Caco-2 (cell line): ENCODE measurements at regions of chr3 and their contacts with region 1.

Region 1: DNA sequence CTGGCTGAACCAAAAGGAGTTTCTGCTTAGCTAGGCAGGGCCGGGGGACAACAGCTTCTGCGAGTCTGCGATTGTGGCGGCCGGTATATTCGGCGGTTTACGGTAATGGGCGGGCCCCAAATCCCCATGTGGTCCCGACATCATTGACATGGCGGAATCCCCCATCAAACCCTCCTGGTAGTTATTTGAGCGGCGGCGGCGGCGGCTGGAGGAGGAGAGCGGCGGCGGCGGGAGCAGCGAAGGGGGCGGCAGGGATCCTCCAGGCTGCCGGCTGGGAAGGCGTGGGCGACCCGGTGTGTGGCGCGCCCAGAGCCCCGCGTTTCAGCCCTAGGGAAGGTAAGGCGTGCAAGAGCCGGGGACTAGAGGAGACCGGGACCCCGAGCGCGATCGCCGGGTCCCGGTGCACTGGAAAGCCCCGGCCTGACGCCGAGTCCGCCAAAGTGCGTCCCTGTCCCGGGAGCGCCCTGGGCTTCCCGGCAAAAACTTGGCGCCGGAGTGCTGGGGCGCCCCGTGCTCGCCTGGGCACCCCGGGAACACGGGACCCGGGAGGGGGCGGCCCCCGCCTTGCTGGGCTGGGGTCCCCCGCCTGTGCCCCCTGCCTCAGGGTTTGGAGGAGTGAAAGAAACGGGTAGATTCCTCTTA is at the start of gene FNDC3B:
- DNase-seq: peak; percentile 94 to 95
- H3K4me3 ChIP-seq: peak within 1 kb of the TSS; percentile 74
- H3K4me3 Mint-ChIP-seq: peak within 1 kb of the TSS; percentile 95
- H3K27ac Mint-ChIP-seq: peak within 1 kb of the TSS; percentile 96
- H3K4me1 ChIP-seq: peaks cover 28% of the 10 kb centered on the region; the same call in 1 of the 2 replicates
- H3K4me1 Mint-ChIP-seq: peaks cover 8% of the 10 kb centered on the region
- H3K27me3 ChIP-seq: no peaks in the 10 kb centered on the region
- H3K27me3 Mint-ChIP-seq: no peaks in the 10 kb centered on the region
- CTCF ChIP-seq: no peak
- total RNA-seq, gene FNDC3B: 59.8 and 63.5 TPM in 2 replicates

Region 2: GRCh38 chr3:171712171-171712938 is 327.2 kb before region 1 on chr3:
- CTCF ChIA-PET with region 1: no interaction called
- POLR2A ChIA-PET with region 1: no interaction called
- intact Hi-C with region 1: no loop called
- DNase-seq: no peak
- H3K4me3 ChIP-seq: no peak overlapping the region
- H3K4me3 Mint-ChIP-seq: no peak overlapping the region
- H3K27ac Mint-ChIP-seq: no peak overlapping the region
- H3K4me1 ChIP-seq: no peaks in the 10 kb centered on the region
- H3K4me1 Mint-ChIP-seq: peaks cover 6% of the 10 kb centered on the region
- H3K27me3 ChIP-seq: no peaks in the 10 kb centered on the region
- H3K27me3 Mint-ChIP-seq: no peaks in the 10 kb centered on the region
- CTCF ChIP-seq: no peak

Region 3: DNA sequence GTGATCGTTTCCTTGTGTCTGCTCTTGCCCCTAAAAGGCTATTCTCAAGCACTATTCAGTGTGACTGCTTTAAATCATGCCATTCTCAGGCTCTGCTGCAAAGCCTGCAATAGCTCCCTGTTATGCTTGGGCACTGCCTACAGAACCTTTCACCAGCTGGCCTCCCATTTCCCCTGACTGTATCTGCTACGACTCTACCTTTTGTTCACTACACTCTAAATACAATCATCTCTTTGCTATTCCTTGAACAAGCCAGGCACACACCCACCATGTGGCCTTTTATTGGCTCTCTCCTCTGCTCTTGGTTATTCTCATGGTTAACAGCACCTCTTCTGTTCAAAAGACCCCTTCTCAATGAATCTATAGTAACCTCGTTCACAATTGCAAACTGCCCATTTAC is 29.8 kb before region 1 on chr3:
- CTCF ChIA-PET with region 1: interaction called, 6 read pairs
- POLR2A ChIA-PET with region 1: no interaction called
- intact Hi-C with region 1: loop called (anchors 1 kb)
- DNase-seq: no peak
- H3K4me3 ChIP-seq: no peak overlapping the region
- H3K4me3 Mint-ChIP-seq: no peak overlapping the region
- H3K27ac Mint-ChIP-seq: no peak overlapping the region
- H3K4me1 ChIP-seq: peaks cover 12% of the 10 kb centered on the region; the same call in 1 of the 2 replicates
- H3K4me1 Mint-ChIP-seq: peaks cover 13% of the 10 kb centered on the region
- H3K27me3 ChIP-seq: no peaks in the 10 kb centered on the region
- H3K27me3 Mint-ChIP-seq: no peaks in the 10 kb centered on the region
- CTCF ChIP-seq: no peak

Region 4: GRCh38 chr3:172096881-172097420 is 57.4 kb after region 1 on chr3:
- CTCF ChIA-PET with region 1: no interaction called
- POLR2A ChIA-PET with region 1: interaction called, 6 read pairs
- intact Hi-C with region 1: loop called (anchors 2 kb)
- DNase-seq: peak; percentile 87 to 88
- H3K4me3 ChIP-seq: no peak overlapping the region
- H3K4me3 Mint-ChIP-seq: peak overlapping the region; percentile 39
- H3K27ac Mint-ChIP-seq: peak overlapping the region; percentile 80
- H3K4me1 ChIP-seq: peaks cover 72% of the 10 kb centered on the region
- H3K4me1 Mint-ChIP-seq: peaks cover 39% of the 10 kb centered on the region
- H3K27me3 ChIP-seq: no peaks in the 10 kb centered on the region
- H3K27me3 Mint-ChIP-seq: no peaks in the 10 kb centered on the region
- CTCF ChIP-seq: no peak

Region 5: GRCh38 chr3:172140499-172141391 is 101.2 kb after region 1 on chr3:
- CTCF ChIA-PET with region 1: no interaction called
- POLR2A ChIA-PET with region 1: interaction called, 3 read pairs
- intact Hi-C with region 1: loop called (anchors 1 kb)
- DNase-seq: peak; percentile 86 to 92
- H3K4me3 ChIP-seq: no peak overlapping the region
- H3K4me3 Mint-ChIP-seq: peak overlapping the region; percentile 59
- H3K27ac Mint-ChIP-seq: peak overlapping the region; percentile 81
- H3K4me1 ChIP-seq: peaks cover 58% of the 10 kb centered on the region
- H3K4me1 Mint-ChIP-seq: peaks cover 54% of the 10 kb centered on the region
- H3K27me3 ChIP-seq: no peaks in the 10 kb centered on the region
- H3K27me3 Mint-ChIP-seq: no peaks in the 10 kb centered on the region
- CTCF ChIP-seq: peak in 1 of 2 experiments; percentile 27

Region 6: DNA sequence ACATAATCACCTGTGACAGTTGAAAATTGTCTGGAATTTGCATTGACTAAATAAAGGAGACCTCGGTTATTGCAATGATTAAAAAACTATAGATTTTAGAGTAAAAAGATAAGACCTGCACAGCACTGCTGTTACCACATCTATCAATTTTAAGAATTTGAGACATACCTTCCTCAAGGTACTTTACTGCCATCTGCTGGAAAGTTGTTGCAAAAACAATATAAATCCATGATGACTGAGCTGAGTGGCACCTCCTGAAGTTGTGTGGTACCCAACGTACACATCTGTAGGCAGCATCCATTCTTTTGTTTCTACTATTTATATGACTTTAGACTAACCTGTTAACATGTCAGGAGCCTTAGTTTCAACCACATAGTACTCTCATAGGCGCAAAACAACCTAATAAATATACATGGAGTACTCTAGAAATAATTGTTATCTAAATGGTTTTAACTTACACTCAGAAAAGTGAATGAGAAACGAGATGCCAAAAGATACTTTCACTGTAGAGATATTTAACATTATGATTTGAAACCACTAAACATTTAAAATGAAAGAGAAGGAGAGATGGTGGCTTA is 302.0 kb after region 1 on chr3:
- CTCF ChIA-PET with region 1: no interaction called
- POLR2A ChIA-PET with region 1: no interaction called
- intact Hi-C with region 1: loop called (anchors 2 kb)
- DNase-seq: peak in 1 of 2 experiments; percentile 57
- H3K4me3 ChIP-seq: no peak overlapping the region
- H3K4me3 Mint-ChIP-seq: no peak overlapping the region
- H3K27ac Mint-ChIP-seq: no peak overlapping the region
- H3K4me1 ChIP-seq: no peaks in the 10 kb centered on the region
- H3K4me1 Mint-ChIP-seq: no peaks in the 10 kb centered on the region
- H3K27me3 ChIP-seq: no peaks in the 10 kb centered on the region
- H3K27me3 Mint-ChIP-seq: no peaks in the 10 kb centered on the region
- CTCF ChIP-seq: peak; percentile 49 to 54